CD8-positive, alpha-beta T cell (primary cell): ENCODE measurements at regions of chr3 and their contacts with region 1.

Region 1: GRCh38 chr3:183178629-183179549 is 16.4 kb upstream of the LAMP3 start:
- DNase-seq: peak in 6 of 9 experiments; percentile 32 to 56 (median 44)
- ATAC-seq: peak; percentile 69
- H3K4me3 ChIP-seq: peak overlapping the region; percentile 43 to 54
- H3K4me3 Mint-ChIP-seq: peak overlapping the region; percentile 71
- H3K27ac ChIP-seq: no peak overlapping the region
- H3K27ac Mint-ChIP-seq: no peak overlapping the region
- H3K4me1 ChIP-seq: peaks cover 4% of the 10 kb centered on the region
- H3K4me1 Mint-ChIP-seq: peaks cover 8% of the 10 kb centered on the region
- H3K27me3 ChIP-seq: peaks cover 11 to 13% of the 10 kb centered on the region in 2 experiments
- H3K27me3 Mint-ChIP-seq: peaks cover 29% of the 10 kb centered on the region
- CTCF ChIP-seq: no peak

Region 2: GRCh38 chr3:182172534-182172933 is 1006.4 kb before region 1 on chr3:
- CTCF ChIA-PET with region 1: no interaction called
- POLR2A ChIA-PET with region 1: no interaction called
- intact Hi-C with region 1: no loop called
- DNase-seq: no peak
- ATAC-seq: no peak
- H3K4me3 ChIP-seq: no peak overlapping the region
- H3K4me3 Mint-ChIP-seq: no peak overlapping the region
- H3K27ac ChIP-seq: no peak overlapping the region
- H3K27ac Mint-ChIP-seq: no peak overlapping the region
- H3K4me1 ChIP-seq: no peaks in the 10 kb centered on the region
- H3K4me1 Mint-ChIP-seq: no peaks in the 10 kb centered on the region
- H3K27me3 ChIP-seq: no peaks in the 10 kb centered on the region
- H3K27me3 Mint-ChIP-seq: no peaks in the 10 kb centered on the region
- CTCF ChIP-seq: no peak

Region 3: DNA sequence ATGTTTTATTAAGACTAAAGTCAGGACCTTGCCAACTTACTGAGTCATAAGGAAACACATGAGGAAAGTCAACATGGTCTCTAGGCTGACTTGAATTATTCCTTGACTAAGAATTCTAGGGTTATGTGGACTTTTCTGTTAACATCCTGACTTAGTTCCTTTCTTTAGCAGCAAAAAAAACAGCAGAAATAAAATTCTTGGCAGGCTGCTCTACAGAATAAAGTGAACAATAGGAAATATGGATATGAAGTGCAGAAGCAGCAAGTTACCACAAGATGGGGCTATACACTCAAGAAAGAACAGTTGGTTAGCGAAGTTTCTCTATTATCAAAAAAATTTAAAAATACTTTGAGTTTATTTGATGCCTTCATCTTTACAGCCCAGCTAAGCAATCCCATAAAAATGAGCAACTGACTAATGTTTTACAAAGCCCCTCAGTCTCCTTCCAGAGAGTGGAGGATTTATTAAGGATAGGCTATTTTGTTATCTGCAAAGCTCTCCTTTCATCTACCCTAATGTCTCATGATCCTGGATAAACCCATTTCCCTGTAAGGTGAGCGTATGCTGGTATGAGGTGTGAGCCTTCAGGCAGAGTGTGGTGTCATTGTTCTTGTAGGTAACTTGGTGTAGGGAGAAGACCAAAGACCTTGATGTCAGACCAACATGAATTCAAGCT is 56.5 kb before region 1 on chr3:
- CTCF ChIA-PET with region 1: interaction called, 30 read pairs
- POLR2A ChIA-PET with region 1: no interaction called
- intact Hi-C with region 1: loop called (anchors 2 kb)
- DNase-seq: peak in 2 of 9 experiments; percentile 58 to 69
- ATAC-seq: peak; percentile 65
- H3K4me3 ChIP-seq: no peak overlapping the region
- H3K4me3 Mint-ChIP-seq: no peak overlapping the region
- H3K27ac ChIP-seq: no peak overlapping the region
- H3K27ac Mint-ChIP-seq: no peak overlapping the region
- H3K4me1 ChIP-seq: no peaks in the 10 kb centered on the region
- H3K4me1 Mint-ChIP-seq: no peaks in the 10 kb centered on the region
- H3K27me3 ChIP-seq: no peaks in the 10 kb centered on the region
- H3K27me3 Mint-ChIP-seq: peaks cover 6% of the 10 kb centered on the region
- CTCF ChIP-seq: peak; percentile 93

Region 4: DNA sequence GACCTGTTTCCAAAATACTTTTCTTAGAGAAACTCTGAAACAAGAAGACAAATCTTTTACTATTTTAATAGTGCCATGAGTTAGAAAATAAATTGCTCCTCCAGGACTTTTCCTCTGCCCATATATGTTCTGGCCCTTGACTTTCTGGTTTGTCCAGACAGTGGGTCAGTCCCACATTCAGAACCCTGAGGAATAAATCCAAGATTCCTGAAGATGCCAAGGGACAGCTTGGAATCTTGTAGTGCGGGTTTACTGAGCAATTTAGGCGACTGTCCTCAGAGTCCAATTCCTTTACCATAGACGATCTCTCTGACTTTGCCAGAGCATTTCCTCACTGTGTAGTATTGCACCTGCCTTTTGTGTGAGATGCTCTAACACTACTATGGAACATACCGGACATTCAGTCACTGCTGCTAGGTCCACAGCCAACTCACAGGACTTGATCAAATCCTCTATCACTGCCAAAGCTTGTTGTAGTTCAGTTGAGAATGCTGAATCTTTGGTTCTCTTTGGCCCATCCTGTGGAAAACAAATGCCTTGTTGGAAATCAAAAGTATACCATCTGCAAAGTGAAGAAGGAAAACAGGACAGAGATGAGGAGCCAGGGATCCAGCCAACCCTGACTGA is 36.8 kb after region 1 on chr3:
- CTCF ChIA-PET with region 1: no interaction called
- POLR2A ChIA-PET with region 1: no interaction called
- intact Hi-C with region 1: loop called in 1 of 2 experiments (anchors 1 kb)
- DNase-seq: no peak
- ATAC-seq: no peak
- H3K4me3 ChIP-seq: no peak overlapping the region
- H3K4me3 Mint-ChIP-seq: no peak overlapping the region
- H3K27ac ChIP-seq: no peak overlapping the region
- H3K27ac Mint-ChIP-seq: no peak overlapping the region
- H3K4me1 ChIP-seq: no peaks in the 10 kb centered on the region
- H3K4me1 Mint-ChIP-seq: no peaks in the 10 kb centered on the region
- H3K27me3 ChIP-seq: no peaks in the 10 kb centered on the region
- H3K27me3 Mint-ChIP-seq: no peaks in the 10 kb centered on the region
- CTCF ChIP-seq: no peak